Activated CD4-positive, alpha-beta T cell treated with anti-CD3 and anti-CD28 coated beads, Interleukin-2, amount 10 ng/mL, durations not matched to agents 24 days and 14 days (primary cell): ENCODE measurements at regions of chr5 and their contacts with region 1.

Region 1: DNA sequence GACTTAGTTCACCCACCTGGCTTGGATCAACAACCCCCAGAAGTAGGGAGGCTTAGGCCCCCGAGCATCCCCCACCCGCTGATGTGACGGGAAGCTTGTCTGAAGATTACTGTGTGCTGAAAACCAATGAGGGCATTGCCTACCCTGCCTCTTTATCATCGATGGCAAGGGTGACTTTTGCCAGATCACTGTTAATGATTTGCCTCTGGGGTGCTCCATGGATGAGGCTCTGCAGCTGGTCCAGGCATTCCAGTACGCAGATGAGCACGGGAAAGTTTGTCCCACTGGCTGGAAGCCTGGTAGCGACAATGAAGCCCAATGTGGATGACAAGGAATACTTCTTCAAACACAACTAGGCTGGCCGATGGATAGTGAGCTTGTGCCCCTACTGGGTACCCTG is 22.0 kb downstream of the RUFY1 start:
- DNase-seq: no peak
- H3K4me3 Mint-ChIP-seq: no peak overlapping the region
- H3K27ac Mint-ChIP-seq: no peak overlapping the region
- H3K4me1 Mint-ChIP-seq: peaks cover 2% of the 10 kb centered on the region
- H3K27me3 Mint-ChIP-seq: no peaks in the 10 kb centered on the region

Region 2: DNA sequence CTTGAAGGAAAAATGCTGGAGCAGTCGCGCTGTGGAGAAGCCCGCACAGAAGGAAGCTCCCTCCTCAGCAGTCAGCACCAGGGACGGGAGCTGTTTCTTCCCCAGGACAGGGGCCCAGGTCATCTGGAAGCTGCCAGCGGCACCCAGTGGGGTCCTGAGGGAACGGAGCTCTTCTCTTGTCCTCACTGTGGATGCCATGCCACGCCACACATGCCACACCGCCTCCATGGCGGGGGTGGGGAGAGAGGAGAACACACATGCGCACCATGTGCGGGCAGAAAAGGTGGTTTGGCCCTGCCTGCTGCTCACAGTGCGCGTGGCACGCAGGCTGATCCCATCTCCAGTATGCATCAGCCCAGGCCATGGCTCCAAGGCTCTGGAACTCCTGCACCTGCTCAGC is 754.3 kb before region 1 on chr5:
- intact Hi-C with region 1: no loop called
- DNase-seq: no peak
- H3K4me3 Mint-ChIP-seq: no peak overlapping the region
- H3K27ac Mint-ChIP-seq: no peak overlapping the region
- H3K4me1 Mint-ChIP-seq: no peaks in the 10 kb centered on the region
- H3K27me3 Mint-ChIP-seq: no peaks in the 10 kb centered on the region

Region 3: GRCh38 chr5:179195561-179196404 is 376.6 kb before region 1 on chr5:
- intact Hi-C with region 1: no loop called
- DNase-seq: no peak
- H3K4me3 Mint-ChIP-seq: no peak overlapping the region
- H3K27ac Mint-ChIP-seq: no peak overlapping the region
- H3K4me1 Mint-ChIP-seq: no peaks in the 10 kb centered on the region
- H3K27me3 Mint-ChIP-seq: no peaks in the 10 kb centered on the region

Region 4: DNA sequence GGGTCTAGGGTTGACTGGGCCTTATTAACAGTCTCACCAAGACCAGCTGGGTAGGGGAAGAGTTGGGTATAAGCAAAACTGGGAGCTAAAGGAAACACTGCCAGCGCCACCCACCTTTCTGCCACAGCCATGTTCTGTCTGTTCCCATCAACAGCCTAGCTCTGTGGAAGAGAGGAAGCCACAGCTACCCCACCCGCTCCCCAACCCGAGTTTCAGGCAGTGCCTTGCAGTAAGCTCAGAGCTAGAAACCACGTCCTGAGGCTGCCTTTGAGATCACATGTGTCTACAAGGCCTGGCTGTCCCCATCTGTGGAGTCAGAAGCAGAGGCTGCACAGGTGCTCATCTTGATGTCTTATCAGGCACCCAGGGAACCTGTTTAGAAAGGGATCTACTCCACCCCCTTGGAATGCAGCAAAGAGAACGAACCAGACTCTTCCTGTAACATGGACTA is 35.8 kb after region 1 on chr5:
- intact Hi-C with region 1: loop called (anchors 5 kb)
- DNase-seq: peak; percentile 91
- H3K4me3 Mint-ChIP-seq: peak overlapping the region; percentile 30
- H3K27ac Mint-ChIP-seq: peak overlapping the region; percentile 77
- H3K4me1 Mint-ChIP-seq: peaks cover 39% of the 10 kb centered on the region
- H3K27me3 Mint-ChIP-seq: no peaks in the 10 kb centered on the region